ENCODE measurements at regions of chr17 and their contacts with region 1.

Region 1: GRCh38 chr17:17591355-17592298 is at the start of gene PEMT:
- DNase-seq: peak; percentile 96
- ATAC-seq: peak; percentile 96
- H3K4me3 Mint-ChIP-seq: peak within 1 kb of the TSS; percentile 92
- H3K27ac Mint-ChIP-seq: peak within 1 kb of the TSS; percentile 95
- H3K4me1 Mint-ChIP-seq: peaks cover 16% of the 10 kb centered on the region
- H3K27me3 Mint-ChIP-seq: no peaks in the 10 kb centered on the region
- total RNA-seq, gene PEMT: 30.4 to 32.3 TPM

Region 2: GRCh38 chr17:17206124-17206912 is 385.3 kb before region 1 on chr17 and contains the start of gene PLD6:
- CTCF ChIA-PET with region 1: no interaction called
- POLR2A ChIA-PET with region 1: no interaction called
- intact Hi-C with region 1: loop called in 1 of 2 experiments (anchors 2 kb)
- DNase-seq: peak; percentile 96
- ATAC-seq: peak; percentile 77
- H3K4me3 Mint-ChIP-seq: peak within 1 kb of the TSS; percentile 90
- H3K27ac Mint-ChIP-seq: peak within 1 kb of the TSS; percentile 97
- H3K4me1 Mint-ChIP-seq: peaks cover 25% of the 10 kb centered on the region
- H3K27me3 Mint-ChIP-seq: no peaks in the 10 kb centered on the region
- total RNA-seq, gene PLD6: 8.3 to 9.9 TPM

Region 3: DNA sequence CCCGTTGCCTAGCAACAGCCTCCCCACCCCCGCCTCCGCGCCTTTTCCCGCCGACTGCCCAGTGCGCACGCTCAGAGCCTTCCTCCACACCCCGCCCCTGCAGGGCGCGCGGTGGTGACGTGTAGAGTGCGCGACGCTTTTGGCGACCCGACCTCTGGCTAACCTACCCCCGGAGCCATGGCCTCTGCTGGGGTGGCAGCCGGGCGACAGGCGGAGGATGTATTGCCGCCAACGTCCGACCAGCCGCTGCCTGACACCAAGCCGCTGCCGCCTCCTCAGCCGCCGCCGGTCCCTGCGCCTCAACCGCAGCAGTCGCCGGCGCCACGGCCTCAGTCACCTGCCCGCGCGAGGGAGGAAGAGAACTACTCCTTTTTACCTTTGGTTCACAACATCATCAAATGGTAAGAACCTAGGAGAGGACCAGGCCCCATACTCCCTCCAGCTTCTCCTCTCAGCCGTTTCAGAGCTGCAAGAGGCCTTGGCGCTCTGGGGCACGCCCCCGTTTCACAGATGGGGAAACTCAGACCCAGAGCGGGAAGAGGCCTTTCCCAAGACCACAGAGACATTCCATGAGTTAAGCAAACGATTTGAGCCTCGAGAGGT is 114.7 kb before region 1 on chr17 and contains the start of gene MED9:
- CTCF ChIA-PET with region 1: no interaction called
- POLR2A ChIA-PET with region 1: no interaction called
- intact Hi-C with region 1: loop called in 1 of 2 experiments (anchors 1 kb)
- DNase-seq: peak; percentile 97
- ATAC-seq: peak; percentile 94
- H3K4me3 Mint-ChIP-seq: peak within 1 kb of the TSS; percentile 94
- H3K27ac Mint-ChIP-seq: peak within 1 kb of the TSS; percentile 84
- H3K4me1 Mint-ChIP-seq: peaks cover 44% of the 10 kb centered on the region
- H3K27me3 Mint-ChIP-seq: no peaks in the 10 kb centered on the region
- total RNA-seq, gene MED9: 12.2 to 14.3 TPM

Region 4: DNA sequence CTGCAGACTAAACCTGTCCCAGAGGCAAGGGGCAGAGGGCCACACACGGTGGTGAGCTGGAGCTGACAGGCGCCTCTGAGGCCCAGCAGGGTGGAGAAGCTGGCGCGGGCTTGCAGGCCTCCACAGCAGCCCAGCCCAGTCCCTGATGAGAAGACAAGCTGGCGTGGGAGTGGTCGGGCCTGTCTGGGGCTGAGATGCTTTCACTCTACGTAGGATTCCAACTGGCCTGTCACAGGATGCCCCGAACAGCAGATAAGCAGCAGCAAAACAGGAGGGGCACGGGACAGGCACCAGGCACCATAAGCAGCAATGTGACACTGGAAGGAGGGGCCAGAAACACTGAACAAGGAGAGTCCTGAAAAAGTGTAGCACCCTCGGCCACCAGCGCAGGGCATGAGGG is 40.3 kb before region 1 on chr17:
- CTCF ChIA-PET with region 1: no interaction called
- POLR2A ChIA-PET with region 1: no interaction called
- intact Hi-C with region 1: no loop called
- DNase-seq: no peak
- ATAC-seq: no peak
- H3K4me3 Mint-ChIP-seq: no peak overlapping the region
- H3K27ac Mint-ChIP-seq: no peak overlapping the region
- H3K4me1 Mint-ChIP-seq: no peaks in the 10 kb centered on the region
- H3K27me3 Mint-ChIP-seq: no peaks in the 10 kb centered on the region

Region 5: DNA sequence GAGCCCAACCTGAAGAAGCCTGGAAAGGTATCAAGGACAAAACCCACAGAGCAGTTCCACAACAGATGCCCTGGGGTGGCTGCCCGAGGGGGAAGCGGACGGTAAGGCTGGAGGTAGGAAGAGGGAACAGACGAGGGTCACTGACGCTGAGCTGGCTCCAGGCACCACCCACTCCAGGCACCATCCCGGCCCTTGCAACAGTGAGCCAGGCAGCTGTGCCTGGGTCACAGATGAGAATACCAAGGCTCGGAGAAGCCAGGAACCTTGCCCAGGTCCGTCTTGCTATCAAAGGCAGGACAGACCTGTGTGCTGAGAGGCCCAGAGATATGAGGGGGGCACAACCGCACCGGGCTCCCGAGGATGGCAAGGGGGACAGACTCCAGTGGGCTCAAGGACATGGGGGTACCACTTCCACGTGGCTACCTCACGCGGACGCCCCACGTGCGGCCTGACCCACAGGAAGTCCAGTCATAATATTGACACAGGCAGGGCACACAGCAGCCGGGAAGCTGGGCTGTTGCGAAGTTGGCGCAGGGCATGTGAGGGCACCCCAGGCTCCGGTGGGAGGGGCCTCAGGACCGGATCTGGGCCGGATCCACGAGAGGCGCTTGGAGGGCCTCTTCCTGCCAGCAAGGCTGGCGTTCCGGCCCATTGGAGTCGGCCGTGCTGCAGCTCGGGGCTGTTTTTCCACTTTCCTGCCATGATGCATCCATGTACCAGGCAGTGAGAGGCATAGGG is 30.1 kb before region 1 on chr17:
- CTCF ChIA-PET with region 1: no interaction called
- POLR2A ChIA-PET with region 1: no interaction called
- intact Hi-C with region 1: no loop called
- DNase-seq: no peak
- ATAC-seq: no peak
- H3K4me3 Mint-ChIP-seq: no peak overlapping the region
- H3K27ac Mint-ChIP-seq: no peak overlapping the region
- H3K4me1 Mint-ChIP-seq: no peaks in the 10 kb centered on the region
- H3K27me3 Mint-ChIP-seq: no peaks in the 10 kb centered on the region

Region 6: DNA sequence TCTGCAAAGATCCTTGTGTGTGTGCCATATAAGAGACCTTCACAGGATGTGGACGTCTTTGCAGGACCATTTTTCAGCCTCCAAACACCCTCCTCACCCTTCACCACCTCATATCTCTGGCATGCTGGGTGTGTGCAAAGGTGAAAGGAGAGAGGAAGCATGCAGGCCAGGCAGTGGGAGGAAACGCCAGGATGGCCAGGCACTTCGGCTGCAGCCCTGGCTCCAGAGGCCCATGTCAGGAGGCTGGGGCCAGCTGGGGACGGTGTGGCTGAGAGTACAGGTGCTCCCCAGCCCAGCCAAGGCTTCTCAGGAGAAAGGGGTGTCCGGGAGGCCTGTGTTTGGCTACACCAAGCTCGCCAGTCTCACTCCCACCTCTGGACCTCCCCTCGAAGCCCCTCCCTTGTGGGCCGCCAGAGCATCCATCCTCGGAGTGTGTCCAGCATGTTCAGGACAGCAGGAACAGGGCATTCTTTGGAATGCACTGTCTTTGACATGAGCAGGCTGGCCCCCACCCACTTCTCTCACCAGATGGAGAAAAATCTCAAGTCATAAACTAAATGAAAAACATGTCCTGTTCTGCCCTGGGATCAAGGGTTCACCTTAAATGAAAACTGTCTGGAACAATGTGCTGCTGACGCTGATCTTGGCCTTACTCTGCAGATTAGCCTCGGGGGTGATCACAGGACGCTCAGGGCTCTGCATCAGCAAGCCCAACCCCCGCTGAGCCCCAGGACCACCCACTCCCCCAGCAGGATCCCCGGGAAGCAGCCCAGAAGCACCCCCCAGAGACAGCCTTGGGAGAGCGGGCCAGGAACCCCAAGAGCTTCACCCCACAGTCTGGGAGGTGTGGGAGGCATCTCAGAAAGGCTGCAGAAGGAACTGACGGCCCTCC is 16.0 kb before region 1 on chr17:
- CTCF ChIA-PET with region 1: no interaction called
- POLR2A ChIA-PET with region 1: no interaction called
- intact Hi-C with region 1: no loop called
- DNase-seq: no peak
- ATAC-seq: no peak
- H3K4me3 Mint-ChIP-seq: no peak overlapping the region
- H3K27ac Mint-ChIP-seq: no peak overlapping the region
- H3K4me1 Mint-ChIP-seq: no peaks in the 10 kb centered on the region
- H3K27me3 Mint-ChIP-seq: no peaks in the 10 kb centered on the region

Region 7: GRCh38 chr17:17628388-17629008 is 36.9 kb after region 1 on chr17:
- CTCF ChIA-PET with region 1: no interaction called
- POLR2A ChIA-PET with region 1: no interaction called
- intact Hi-C with region 1: loop called in 1 of 2 experiments (anchors 1 kb)
- DNase-seq: peak; percentile 66
- ATAC-seq: peak; percentile 88
- H3K4me3 Mint-ChIP-seq: peak overlapping the region; percentile 70
- H3K27ac Mint-ChIP-seq: peak overlapping the region; percentile 86
- H3K4me1 Mint-ChIP-seq: peaks cover 11% of the 10 kb centered on the region
- H3K27me3 Mint-ChIP-seq: no peaks in the 10 kb centered on the region

Region 8: GRCh38 chr17:17836250-17836817 is 244.7 kb after region 1 on chr17:
- CTCF ChIA-PET with region 1: no interaction called
- POLR2A ChIA-PET with region 1: no interaction called
- intact Hi-C with region 1: loop called in 1 of 2 experiments (anchors 1 kb)
- DNase-seq: peak; percentile 99
- ATAC-seq: peak; percentile 74
- H3K4me3 Mint-ChIP-seq: peak overlapping the region; percentile 94
- H3K27ac Mint-ChIP-seq: peak overlapping the region; percentile 98
- H3K4me1 Mint-ChIP-seq: peaks cover 74% of the 10 kb centered on the region
- H3K27me3 Mint-ChIP-seq: no peaks in the 10 kb centered on the region

Region 9: DNA sequence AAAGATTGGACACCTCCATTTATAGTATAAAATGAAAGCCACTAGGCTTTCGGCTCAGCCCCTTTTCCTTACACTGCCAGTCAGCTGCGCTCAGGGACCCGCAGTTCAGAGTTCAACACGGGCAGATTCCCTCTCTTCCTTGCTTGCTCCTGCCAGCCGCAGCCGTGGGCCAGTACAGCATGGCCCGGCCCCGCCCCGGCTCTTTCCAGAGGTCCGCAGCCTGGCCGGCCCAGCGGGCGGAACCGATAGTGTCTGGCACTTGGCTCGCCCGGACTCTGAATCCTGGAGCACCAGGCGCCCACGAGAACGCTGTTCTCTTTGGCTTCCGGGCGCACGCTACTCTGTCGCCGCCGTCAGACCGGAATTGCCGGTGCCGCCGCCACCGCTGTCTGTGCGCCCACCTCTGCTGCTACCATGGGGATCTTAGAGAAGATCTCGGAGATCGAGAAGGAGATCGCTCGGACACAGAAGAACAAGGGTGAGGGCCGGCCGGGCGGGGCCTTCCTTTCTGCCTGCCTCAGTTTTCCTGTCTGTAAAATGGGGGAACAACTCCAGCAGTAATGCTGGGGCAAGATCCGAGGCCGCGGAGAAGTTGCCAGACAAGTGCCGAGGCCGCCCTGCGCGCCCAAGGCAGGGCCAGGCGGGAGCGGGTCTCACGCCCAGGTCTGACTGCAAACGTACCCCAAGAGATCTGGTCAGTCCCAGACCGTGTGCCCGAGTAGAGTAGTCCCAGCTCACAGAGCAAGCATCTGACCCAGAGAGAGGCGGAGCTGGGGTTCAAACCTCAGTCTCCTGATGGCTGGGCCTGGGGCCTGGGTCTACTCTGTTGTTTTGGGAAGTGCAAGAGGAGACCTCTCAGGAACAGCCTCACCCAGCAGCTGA is 496.2 kb after region 1 on chr17 and contains the start of gene DRG2:
- CTCF ChIA-PET with region 1: no interaction called
- POLR2A ChIA-PET with region 1: no interaction called
- intact Hi-C with region 1: loop called in 1 of 2 experiments (anchors 1 kb)
- DNase-seq: peak; percentile 93
- ATAC-seq: peak; percentile 90
- H3K4me3 Mint-ChIP-seq: peak within 1 kb of the TSS; percentile 99
- H3K27ac Mint-ChIP-seq: peak within 1 kb of the TSS; percentile 98
- H3K4me1 Mint-ChIP-seq: peaks cover 22% of the 10 kb centered on the region
- H3K27me3 Mint-ChIP-seq: no peaks in the 10 kb centered on the region
- total RNA-seq, gene DRG2: 42.5 to 45.6 TPM

Measured in activated CD4-positive, alpha-beta T cell treated with anti-CD3 and anti-CD28 coated beads for 36 hours (primary cell).